Kidney (tissue), 22 donors: ENCODE measurements at regions of chr17 and their contacts with region 1.

Region 1: GRCh38 chr17:49779739-49780231 is 8.7 kb upstream of the KAT7 start:
- DNase-seq: peak in 3 of 5 donors; percentile 19 to 78 (median 50)
- H3K4me3 ChIP-seq: no peak overlapping the region
- H3K27ac ChIP-seq: no peak overlapping the region
- H3K4me1 ChIP-seq: peaks cover 0 to 12% (median 11%) of the 10 kb centered on the region in 3 donors
- H3K27me3 ChIP-seq: no peaks in the 10 kb centered on the region
- CTCF ChIP-seq: peak; percentile 57

Region 2: GRCh38 chr17:49707608-49708514 is 71.9 kb before region 1 on chr17 and contains the start of gene SLC35B1:
- intact Hi-C with region 1: loop called (anchors 10 kb)
- DNase-seq: peak; percentile 99 to 100 (median 99)
- H3K4me3 ChIP-seq: peak within 1 kb of the TSS; percentile 76 to 96 (median 86)
- H3K27ac ChIP-seq: peak within 1 kb of the TSS; percentile 99
- H3K4me1 ChIP-seq: peaks cover 0 to 13% (median 4%) of the 10 kb centered on the region in 3 donors
- H3K27me3 ChIP-seq: no peaks in the 10 kb centered on the region
- CTCF ChIP-seq: peak; percentile 92
- total RNA-seq, gene SLC35B1: 56.6 TPM

Region 3: GRCh38 chr17:49926886-49927285 is 147.1 kb after region 1 on chr17:
- intact Hi-C with region 1: no loop called
- DNase-seq: no peak
- H3K4me3 ChIP-seq: no peak overlapping the region
- H3K27ac ChIP-seq: no peak overlapping the region
- H3K4me1 ChIP-seq: no peaks in the 10 kb centered on the region
- H3K27me3 ChIP-seq: no peaks in the 10 kb centered on the region
- CTCF ChIP-seq: no peak